Lower leg skin (tissue), 4 donors: ENCODE measurements at regions of chr3 and their contacts with region 1.

Region 1: GRCh38 chr3:64209866-64210621 is 15.2 kb downstream of the PRICKLE2 start:
- DNase-seq: peak in 1 of 2 donors; percentile 92
- H3K4me3 ChIP-seq: no peak overlapping the region
- CTCF ChIP-seq: no peak
- POLR2A ChIP-seq: no peak

Region 2: GRCh38 chr3:65894679-65895453 is 1684.8 kb after region 1 on chr3:
- intact Hi-C with region 1: loop called (anchors 10 kb)
- DNase-seq: peak in 1 of 2 donors; percentile 25
- H3K4me3 ChIP-seq: no peak overlapping the region
- CTCF ChIP-seq: no peak
- POLR2A ChIP-seq: no peak